HepG2 (cell line): ENCODE measurements at regions of chr11 and their contacts with region 1.

Region 1: GRCh38 chr11:73325036-73325981 is 17.2 kb downstream of the ARHGEF17 start:
- DNase-seq: peak; percentile 66
- ATAC-seq: peak; percentile 48
- H3K4me3 ChIP-seq: no peak overlapping the region
- H3K27ac ChIP-seq: peak overlapping the region; percentile 52
- H3K4me1 ChIP-seq: peaks cover 95% of the 10 kb centered on the region
- H3K27me3 ChIP-seq: no peaks in the 10 kb centered on the region
- CTCF ChIP-seq: no peak
- EP300 ChIP-seq: no peak
- POLR2A ChIP-seq: peak in 1 of 2 experiments; percentile 31; a peak in 1 of 4 replicates
- RAD21 ChIP-seq: no peak

Region 2: GRCh38 chr11:73198677-73199076 is 126.6 kb before region 1 on chr11:
- CTCF ChIA-PET with region 1: no interaction called
- POLR2A ChIA-PET with region 1: no interaction called
- in situ Hi-C with region 1: no loop called
- intact Hi-C with region 1: no loop called
- DNase-seq: peak; percentile 62
- ATAC-seq: no peak
- H3K4me3 ChIP-seq: no peak overlapping the region
- H3K27ac ChIP-seq: no peak overlapping the region
- H3K4me1 ChIP-seq: peaks cover 17% of the 10 kb centered on the region
- H3K27me3 ChIP-seq: peaks cover 3 to 18% of the 10 kb centered on the region in 2 experiments; a peak in 3 of 5 replicates
- CTCF ChIP-seq: no peak
- EP300 ChIP-seq: no peak
- POLR2A ChIP-seq: no peak
- RAD21 ChIP-seq: no peak

Region 3: GRCh38 chr11:73295231-73295995 is 29.9 kb before region 1 on chr11:
- CTCF ChIA-PET with region 1: no interaction called
- POLR2A ChIA-PET with region 1: interaction called, 3 read pairs
- in situ Hi-C with region 1: no loop called
- intact Hi-C with region 1: loop called (anchors 1 kb)
- DNase-seq: peak; percentile 57
- ATAC-seq: peak; percentile 67
- H3K4me3 ChIP-seq: no peak overlapping the region
- H3K27ac ChIP-seq: no peak overlapping the region
- H3K4me1 ChIP-seq: no peaks in the 10 kb centered on the region
- H3K27me3 ChIP-seq: peaks cover 8 to 35% of the 10 kb centered on the region in 2 experiments; a peak in 3 of 5 replicates
- CTCF ChIP-seq: peak; percentile 93
- EP300 ChIP-seq: no peak
- POLR2A ChIP-seq: no peak
- RAD21 ChIP-seq: peak; percentile 60; the same call in 1 of the 2 replicates

Region 4: DNA sequence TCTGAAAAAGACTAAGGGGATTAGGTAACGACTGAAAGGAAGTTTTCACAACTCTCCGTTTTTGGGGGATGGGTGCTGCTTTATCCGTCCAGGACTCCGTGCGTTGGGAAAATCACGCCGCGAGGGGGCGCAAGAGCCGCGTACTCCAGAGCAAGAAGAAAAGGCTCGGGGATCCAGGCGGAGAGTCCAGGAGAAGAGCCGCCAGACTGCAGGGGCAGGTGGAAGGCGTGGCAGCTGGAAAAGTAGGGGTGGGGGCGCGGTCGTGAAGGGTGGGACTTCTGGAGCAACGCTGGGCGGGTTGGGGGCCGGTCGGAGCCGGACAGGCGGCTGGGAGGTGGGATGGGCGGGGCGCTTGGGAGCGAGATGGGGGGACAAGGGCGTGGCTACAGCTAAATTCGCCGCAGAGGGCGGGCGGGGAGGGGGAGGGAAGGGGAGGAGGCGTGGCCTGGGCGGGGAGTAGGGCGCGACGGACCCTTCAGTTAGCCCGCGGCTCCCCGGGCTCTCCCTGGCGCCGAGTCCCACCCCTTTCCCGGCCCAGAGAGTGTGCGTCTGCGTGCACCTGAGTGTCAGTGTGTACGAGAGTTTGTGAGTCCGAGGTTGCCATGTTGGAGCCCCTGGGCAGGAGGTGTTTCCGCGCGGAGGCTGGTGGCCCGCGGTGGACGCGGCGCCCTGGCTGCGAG is 17.8 kb before region 1 on chr11:
- CTCF ChIA-PET with region 1: interaction called, 8 read pairs
- POLR2A ChIA-PET with region 1: interaction called, 205 read pairs
- in situ Hi-C with region 1: no loop called
- intact Hi-C with region 1: no loop called
- DNase-seq: peak; percentile 95
- ATAC-seq: peak; percentile 70
- H3K4me3 ChIP-seq: peak overlapping the region; percentile 82 to 86 (median 85)
- H3K27ac ChIP-seq: peak overlapping the region; percentile 99
- H3K4me1 ChIP-seq: peaks cover 44% of the 10 kb centered on the region
- H3K27me3 ChIP-seq: peaks cover 0 to 4% of the 10 kb centered on the region in 2 experiments; a peak in 2 of 5 replicates
- CTCF ChIP-seq: peak; percentile 96
- EP300 ChIP-seq: peak in 1 of 2 experiments; percentile 30; a peak in 1 of 4 replicates
- POLR2A ChIP-seq: peak in 1 of 2 experiments; percentile 91; a peak in 2 of 4 replicates
- RAD21 ChIP-seq: peak; percentile 95

Region 5: DNA sequence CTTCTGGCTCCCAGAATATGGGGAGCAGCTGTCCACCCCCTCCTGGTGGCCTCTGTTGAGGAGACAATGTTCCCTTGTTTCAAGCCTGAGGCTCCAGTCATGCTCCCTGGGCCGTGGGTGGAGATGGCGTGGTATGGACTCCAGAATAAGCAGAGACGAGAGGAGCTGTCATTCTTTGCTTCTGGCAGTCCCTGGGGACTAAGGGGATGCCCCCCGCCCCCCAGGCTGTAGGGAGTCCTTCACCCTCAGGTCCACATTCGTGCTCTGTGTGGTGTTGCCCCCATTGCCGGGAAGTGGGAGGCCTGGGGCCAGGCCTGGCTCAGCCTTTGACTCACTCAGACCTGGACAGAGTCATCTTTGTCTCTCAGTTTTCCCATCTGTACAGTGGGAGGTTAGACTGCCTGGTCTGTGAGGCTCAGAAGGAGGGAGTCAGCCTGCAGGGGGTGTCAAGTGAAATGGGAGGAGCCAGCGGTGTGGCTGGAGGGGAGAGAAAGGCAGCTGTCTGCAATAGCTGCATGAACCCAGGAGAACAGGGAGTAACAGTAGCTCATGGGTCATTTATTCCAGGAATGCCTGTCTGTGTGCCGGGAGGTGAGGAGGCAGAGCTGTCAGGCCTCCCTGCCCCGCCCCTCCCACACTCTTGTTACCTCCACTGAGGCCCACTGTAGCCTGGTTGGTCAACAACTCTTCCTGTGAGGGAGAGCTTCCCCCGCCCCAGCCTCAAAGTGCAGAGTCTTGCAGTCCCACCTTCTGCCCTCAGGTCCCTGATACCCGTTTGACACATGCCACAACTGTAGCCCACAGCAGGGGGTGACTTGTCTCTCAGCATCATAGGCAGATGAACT is 11.0 kb before region 1 on chr11:
- CTCF ChIA-PET with region 1: no interaction called
- POLR2A ChIA-PET with region 1: interaction called, 205 read pairs
- in situ Hi-C with region 1: no loop called
- intact Hi-C with region 1: loop called (anchors 1 kb)
- DNase-seq: peak; percentile 95
- ATAC-seq: peak; percentile 89
- H3K4me3 ChIP-seq: peak overlapping the region in 1 of 3 experiments; percentile 55; a peak in 1 of 6 replicates
- H3K27ac ChIP-seq: peak overlapping the region; percentile 59
- H3K4me1 ChIP-seq: peaks cover 95% of the 10 kb centered on the region
- H3K27me3 ChIP-seq: no peaks in the 10 kb centered on the region
- CTCF ChIP-seq: peak; percentile 40
- EP300 ChIP-seq: peak in 1 of 2 experiments; percentile 48; a peak in 1 of 4 replicates
- POLR2A ChIP-seq: 0 out of 4 replicates have a peak, but pooled peaks of 1 of the 2 experiments have one; percentile 37
- RAD21 ChIP-seq: no peak; the same call in none of the 2 replicates